CD4-positive, alpha-beta T cell (primary cell): ENCODE measurements at regions of chr22 and their contacts with region 1.

Region 1: DNA sequence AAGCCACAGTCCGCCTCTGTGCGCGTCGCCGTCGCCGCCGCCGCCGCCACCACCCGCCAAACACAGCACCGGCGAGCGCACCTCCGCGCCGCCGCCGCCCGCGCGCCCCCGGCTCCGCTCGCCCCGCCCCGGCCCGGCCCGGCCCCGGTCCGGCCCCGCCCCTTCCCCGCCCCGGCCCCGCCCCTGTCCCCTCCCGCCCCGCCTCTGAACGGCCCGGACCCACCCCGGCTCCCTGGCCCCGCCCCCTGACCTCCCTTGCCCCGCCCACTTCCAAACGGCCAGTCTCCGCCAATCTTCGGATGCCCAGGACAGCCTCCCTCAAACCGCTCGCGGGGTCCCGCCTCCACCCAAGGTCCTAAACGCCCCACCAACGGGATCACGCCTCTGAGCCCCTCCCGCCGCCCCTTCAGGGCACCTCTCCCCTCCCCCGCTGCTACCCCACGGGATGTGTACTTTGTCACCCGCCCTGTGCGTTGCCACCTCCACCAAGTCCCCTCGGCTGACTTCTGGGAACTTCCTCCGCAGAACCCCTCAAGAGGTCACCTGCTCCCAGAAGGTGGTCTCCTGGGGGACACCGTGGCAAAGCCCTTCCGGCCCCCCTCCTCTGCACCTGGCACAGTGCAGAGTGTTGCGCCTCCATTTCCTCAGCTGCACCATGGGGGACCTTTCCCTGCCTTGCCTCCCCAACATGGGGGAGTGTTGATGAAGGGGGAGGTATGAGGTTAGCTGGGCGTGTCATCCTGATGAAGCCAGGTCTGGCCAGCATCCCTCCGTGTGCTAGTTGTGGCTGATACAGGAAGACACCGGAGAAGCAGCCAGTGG is at the start of gene KIAA0930:
- DNase-seq: peak; percentile 70 to 89 (median 76)
- ATAC-seq: peak; percentile 62
- H3K4me3 ChIP-seq: peak within 1 kb of the TSS; percentile 72
- H3K4me3 Mint-ChIP-seq: peak within 1 kb of the TSS; percentile 94
- H3K27ac ChIP-seq: peak within 1 kb of the TSS; percentile 32 to 52
- H3K27ac Mint-ChIP-seq: peak within 1 kb of the TSS; percentile 90
- H3K4me1 ChIP-seq: peaks cover 39% of the 10 kb centered on the region
- H3K4me1 Mint-ChIP-seq: peaks cover 19% of the 10 kb centered on the region
- H3K27me3 ChIP-seq: no peaks in the 10 kb centered on the region
- H3K27me3 Mint-ChIP-seq: no peaks in the 10 kb centered on the region
- CTCF ChIP-seq: no peak
- total RNA-seq, gene KIAA0930: 6.7 to 7.4 TPM

Region 2: DNA sequence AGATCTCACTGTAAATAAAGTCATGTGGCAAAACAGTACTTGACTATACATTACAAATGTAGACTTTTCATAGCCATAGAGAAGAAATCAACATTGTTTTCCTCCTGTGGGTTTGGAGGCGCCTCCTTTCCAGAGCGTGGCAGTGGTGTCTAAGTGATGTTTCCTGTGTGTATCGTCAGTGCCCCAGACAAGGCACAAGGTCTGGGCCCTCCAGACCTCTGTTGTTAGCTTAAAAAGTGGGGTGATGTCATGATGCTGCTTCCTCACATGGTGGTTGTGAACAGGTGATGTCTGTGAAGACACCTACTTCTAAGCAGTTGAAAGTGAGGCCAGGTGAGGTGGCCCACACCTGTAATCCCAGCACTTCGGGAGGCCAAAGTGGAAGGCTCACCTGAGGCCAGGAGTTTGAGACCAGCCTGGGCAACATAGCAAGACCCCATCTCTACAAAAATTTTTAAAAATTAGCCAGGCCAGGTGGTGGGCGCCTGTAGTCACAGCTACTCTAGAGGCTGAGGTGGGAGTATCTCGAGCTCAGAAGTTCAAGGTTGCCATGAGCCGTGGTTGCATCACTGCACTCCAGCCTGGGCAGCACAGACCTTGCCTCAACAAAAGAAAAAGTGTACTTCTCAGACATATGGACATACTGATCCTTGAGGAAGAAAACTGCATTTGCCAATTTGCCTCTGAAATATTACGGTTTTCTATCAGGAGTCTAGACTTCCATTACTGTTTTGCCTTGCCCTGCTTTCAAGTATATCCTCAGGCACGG is 61.6 kb before region 1 on chr22:
- CTCF ChIA-PET with region 1: no interaction called
- POLR2A ChIA-PET with region 1: no interaction called
- intact Hi-C with region 1: loop called in 1 of 2 experiments (anchors 2 kb)
- DNase-seq: peak in 12 of 14 experiments; percentile 22 to 79 (median 50)
- ATAC-seq: peak; percentile 97
- H3K4me3 ChIP-seq: no peak overlapping the region
- H3K4me3 Mint-ChIP-seq: peak overlapping the region; percentile 53
- H3K27ac ChIP-seq: peak overlapping the region; percentile 3 to 66
- H3K27ac Mint-ChIP-seq: peak overlapping the region; percentile 87
- H3K4me1 ChIP-seq: peaks cover 38% of the 10 kb centered on the region
- H3K4me1 Mint-ChIP-seq: peaks cover 64% of the 10 kb centered on the region
- H3K27me3 ChIP-seq: no peaks in the 10 kb centered on the region
- H3K27me3 Mint-ChIP-seq: no peaks in the 10 kb centered on the region
- CTCF ChIP-seq: peak; percentile 21

Region 3: DNA sequence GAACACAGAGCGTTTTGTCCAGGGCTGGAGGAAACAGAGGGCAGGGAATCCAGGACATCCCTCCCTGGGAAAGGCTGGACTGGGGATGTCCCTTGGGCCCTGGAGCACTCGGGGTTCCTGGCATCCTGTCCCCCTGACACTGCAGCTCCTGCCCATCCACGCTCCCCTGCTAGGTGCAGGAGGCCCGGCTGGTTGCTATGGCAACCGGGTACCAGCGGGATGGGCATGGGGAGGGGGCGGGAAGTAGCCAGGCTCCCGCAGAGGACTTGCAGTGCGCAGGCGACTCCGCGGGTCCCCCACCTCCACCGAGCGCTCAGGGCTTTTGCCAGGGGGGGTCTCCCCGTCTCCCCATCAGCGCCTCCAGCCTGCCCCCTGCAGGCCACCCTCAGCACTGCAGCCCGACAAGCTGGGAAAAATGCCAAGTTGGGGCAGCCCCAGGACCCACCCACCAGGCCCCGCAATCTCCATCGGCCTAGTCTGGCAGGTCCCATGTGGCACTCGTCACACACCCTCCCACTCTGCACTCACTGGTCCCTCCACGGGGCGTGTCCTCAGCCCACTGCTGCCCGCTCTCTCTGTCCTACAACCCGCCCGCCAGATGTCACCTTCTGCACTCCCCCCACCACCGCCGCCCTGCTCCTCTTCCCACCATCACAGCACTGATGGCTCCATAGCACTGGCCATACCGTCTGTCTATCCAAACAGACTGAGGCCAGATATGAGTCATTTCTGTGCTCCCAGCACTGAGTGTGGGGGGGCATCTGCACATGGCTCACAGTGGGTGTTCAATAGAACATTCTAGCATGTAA is 31.8 kb before region 1 on chr22:
- CTCF ChIA-PET with region 1: no interaction called
- POLR2A ChIA-PET with region 1: no interaction called
- intact Hi-C with region 1: no loop called
- DNase-seq: peak in 11 of 14 experiments; percentile 9 to 59 (median 25)
- ATAC-seq: peak; percentile 48
- H3K4me3 ChIP-seq: no peak overlapping the region
- H3K4me3 Mint-ChIP-seq: no peak overlapping the region
- H3K27ac ChIP-seq: no peak overlapping the region
- H3K27ac Mint-ChIP-seq: no peak overlapping the region
- H3K4me1 ChIP-seq: no peaks in the 10 kb centered on the region
- H3K4me1 Mint-ChIP-seq: no peaks in the 10 kb centered on the region
- H3K27me3 ChIP-seq: no peaks in the 10 kb centered on the region
- H3K27me3 Mint-ChIP-seq: no peaks in the 10 kb centered on the region
- CTCF ChIP-seq: peak; percentile 55

Region 4: GRCh38 chr22:45254789-45255278 is 13.8 kb after region 1 on chr22:
- CTCF ChIA-PET with region 1: no interaction called
- POLR2A ChIA-PET with region 1: no interaction called
- intact Hi-C with region 1: no loop called
- DNase-seq: peak in 1 of 14 experiments; percentile 58
- ATAC-seq: no peak
- H3K4me3 ChIP-seq: no peak overlapping the region
- H3K4me3 Mint-ChIP-seq: no peak overlapping the region
- H3K27ac ChIP-seq: no peak overlapping the region
- H3K27ac Mint-ChIP-seq: no peak overlapping the region
- H3K4me1 ChIP-seq: peaks cover 4% of the 10 kb centered on the region
- H3K4me1 Mint-ChIP-seq: no peaks in the 10 kb centered on the region
- H3K27me3 ChIP-seq: no peaks in the 10 kb centered on the region
- H3K27me3 Mint-ChIP-seq: peaks cover 2% of the 10 kb centered on the region
- CTCF ChIP-seq: no peak

Region 5: GRCh38 chr22:45309472-45310227 is 68.6 kb after region 1 on chr22 and contains the start of gene FAM118A:
- CTCF ChIA-PET with region 1: no interaction called
- POLR2A ChIA-PET with region 1: no interaction called
- intact Hi-C with region 1: loop called in 1 of 2 experiments (anchors 2 kb)
- DNase-seq: peak; percentile 91 to 99 (median 96)
- ATAC-seq: peak; percentile 84
- H3K4me3 ChIP-seq: peak within 1 kb of the TSS; percentile 93
- H3K4me3 Mint-ChIP-seq: peak within 1 kb of the TSS; percentile 85
- H3K27ac ChIP-seq: peak within 1 kb of the TSS; percentile 77 to 87
- H3K27ac Mint-ChIP-seq: peak within 1 kb of the TSS; percentile 95
- H3K4me1 ChIP-seq: peaks cover 55% of the 10 kb centered on the region
- H3K4me1 Mint-ChIP-seq: peaks cover 49% of the 10 kb centered on the region
- H3K27me3 ChIP-seq: no peaks in the 10 kb centered on the region
- H3K27me3 Mint-ChIP-seq: no peaks in the 10 kb centered on the region
- CTCF ChIP-seq: no peak
- total RNA-seq, gene FAM118A: 159 to 161 TPM